Right ventricle myocardium inferior (tissue), 1 donor: ENCODE measurements at regions of chr9 and their contacts with region 1.

Region 1: GRCh38 chr9:101398068-101398929 is at the starts of genes MRPL50 and ZNF189:
- DNase-seq: peak; percentile 99
- ATAC-seq: peak; percentile 99
- total RNA-seq, gene MRPL50: 16.5 TPM
- total RNA-seq, gene ZNF189: 15.2 TPM

Region 2: GRCh38 chr9:101443364-101443771 is 45.1 kb after region 1 on chr9:
- intact Hi-C with region 1: loop called (anchors 2 kb)
- DNase-seq: peak; percentile 71
- ATAC-seq: peak; percentile 95